Activated T-helper 1 cell treated with anti-CD3 and anti-CD28 coated beads, Interleukin-12 subunit alpha, Interleukin-12 subunit beta, Interleukin-2, Interleukin-4 antibody, amounts not matched to agents 30 ng/mL and 10 ng/mL and 1 ng/mL, durations not matched to agents 14 hours and 24 hours and 36 hours (primary cell): ENCODE measurements at regions of chr1 and their contacts with region 1.

Region 1: GRCh38 chr1:212284744-212285684 is at the start of gene PPP2R5A:
- DNase-seq: peak; percentile 99
- H3K4me3 Mint-ChIP-seq: peak within 1 kb of the TSS; percentile 97
- H3K27ac Mint-ChIP-seq: peak within 1 kb of the TSS; percentile 99
- H3K4me1 Mint-ChIP-seq: peaks cover 50% of the 10 kb centered on the region
- H3K27me3 Mint-ChIP-seq: peaks cover 3% of the 10 kb centered on the region
- total RNA-seq, gene PPP2R5A: 46.4 and 53.7 TPM in 2 replicates

Region 2: GRCh38 chr1:211680752-211681327 is 604.2 kb before region 1 on chr1:
- intact Hi-C with region 1: loop called (anchors 1 kb)
- DNase-seq: peak; percentile 64
- H3K4me3 Mint-ChIP-seq: no peak overlapping the region
- H3K27ac Mint-ChIP-seq: peak overlapping the region; percentile 86
- H3K4me1 Mint-ChIP-seq: peaks cover 14% of the 10 kb centered on the region
- H3K27me3 Mint-ChIP-seq: no peaks in the 10 kb centered on the region

Region 3: DNA sequence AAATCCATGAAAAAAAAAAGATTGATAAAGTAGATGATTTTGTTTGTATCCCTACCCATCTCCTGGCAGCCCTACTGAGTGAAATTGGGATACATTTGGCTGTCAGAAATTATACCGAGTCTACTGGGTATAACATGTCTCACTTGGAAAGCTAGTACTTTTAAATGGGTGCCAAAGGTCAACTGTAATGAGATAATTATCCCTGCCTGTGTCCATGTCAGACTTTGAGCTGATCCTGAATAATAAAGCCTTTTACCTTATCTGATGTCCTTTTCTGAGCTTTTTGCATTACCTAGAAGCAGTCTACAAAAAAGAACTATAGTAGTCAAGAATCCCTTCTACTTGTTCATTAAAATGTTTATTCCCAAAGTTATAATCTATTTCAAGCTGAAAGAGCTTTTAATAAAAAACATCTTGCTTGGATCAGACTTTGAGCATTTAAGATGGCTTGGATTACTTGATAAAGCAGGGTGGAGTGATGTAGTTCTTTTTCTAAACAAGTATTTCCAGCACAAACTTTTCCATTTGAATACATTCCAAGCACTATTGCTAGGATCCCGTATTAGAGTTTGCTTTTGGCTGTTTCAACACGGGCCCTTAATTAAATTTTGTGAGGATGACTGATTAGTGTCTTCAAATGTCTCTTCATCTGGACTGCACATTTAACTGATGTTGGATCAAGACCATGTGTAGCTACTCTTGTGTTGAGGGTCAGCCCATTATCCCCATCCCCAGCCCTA is 180.3 kb before region 1 on chr1:
- intact Hi-C with region 1: loop called (anchors 5 kb)
- DNase-seq: no peak
- H3K4me3 Mint-ChIP-seq: no peak overlapping the region
- H3K27ac Mint-ChIP-seq: no peak overlapping the region
- H3K4me1 Mint-ChIP-seq: peaks cover 30% of the 10 kb centered on the region
- H3K27me3 Mint-ChIP-seq: no peaks in the 10 kb centered on the region

Region 4: DNA sequence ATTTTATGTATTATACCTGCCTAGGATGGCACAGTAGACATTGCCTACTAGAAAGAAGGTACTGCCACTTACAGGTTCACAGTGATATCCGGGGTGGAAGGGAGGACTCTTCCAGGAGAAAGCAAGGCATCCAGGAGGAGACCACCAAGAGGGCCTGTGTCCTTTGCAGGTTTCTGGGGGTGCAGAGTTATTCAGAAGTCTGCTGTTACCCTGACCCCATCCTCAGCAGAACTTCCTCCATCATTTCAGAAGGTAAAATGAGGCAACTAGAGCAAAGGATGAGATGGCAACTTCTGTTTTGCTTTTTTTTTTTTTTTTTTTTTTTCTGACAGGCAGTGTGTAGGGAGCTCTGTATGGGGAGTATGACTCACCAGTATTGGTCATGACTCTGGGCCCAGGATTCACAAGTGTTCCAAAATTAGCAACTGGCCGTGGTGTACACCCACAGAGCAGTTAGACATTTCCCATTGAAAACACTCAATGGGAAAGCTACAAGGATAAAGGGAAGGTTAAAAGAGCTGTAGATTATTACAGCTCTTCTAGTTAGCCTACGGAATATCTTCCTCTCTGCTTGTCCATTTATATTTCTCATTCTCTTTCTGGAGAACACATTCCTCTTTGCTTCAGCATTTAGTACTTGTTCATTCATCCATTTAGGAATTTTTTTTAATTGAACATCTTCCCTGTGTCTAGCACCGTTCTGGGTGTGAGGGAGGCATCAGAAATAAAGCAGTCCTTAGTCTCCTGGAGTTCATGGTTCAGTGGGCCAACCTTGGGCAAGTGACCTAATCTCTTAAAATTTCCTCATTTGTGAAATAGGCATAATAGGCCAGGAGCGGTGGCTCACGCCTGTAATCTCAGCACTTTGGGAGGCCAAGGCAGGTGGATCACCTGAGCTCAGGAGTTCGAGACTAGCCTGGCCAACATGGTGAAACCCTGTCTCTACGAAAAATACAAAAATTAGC is 50.3 kb before region 1 on chr1:
- intact Hi-C with region 1: loop called (anchors 1 kb)
- DNase-seq: no peak
- H3K4me3 Mint-ChIP-seq: peak overlapping the region; percentile 57
- H3K27ac Mint-ChIP-seq: peak overlapping the region; percentile 67
- H3K4me1 Mint-ChIP-seq: peaks cover 72% of the 10 kb centered on the region
- H3K27me3 Mint-ChIP-seq: no peaks in the 10 kb centered on the region

Region 5: DNA sequence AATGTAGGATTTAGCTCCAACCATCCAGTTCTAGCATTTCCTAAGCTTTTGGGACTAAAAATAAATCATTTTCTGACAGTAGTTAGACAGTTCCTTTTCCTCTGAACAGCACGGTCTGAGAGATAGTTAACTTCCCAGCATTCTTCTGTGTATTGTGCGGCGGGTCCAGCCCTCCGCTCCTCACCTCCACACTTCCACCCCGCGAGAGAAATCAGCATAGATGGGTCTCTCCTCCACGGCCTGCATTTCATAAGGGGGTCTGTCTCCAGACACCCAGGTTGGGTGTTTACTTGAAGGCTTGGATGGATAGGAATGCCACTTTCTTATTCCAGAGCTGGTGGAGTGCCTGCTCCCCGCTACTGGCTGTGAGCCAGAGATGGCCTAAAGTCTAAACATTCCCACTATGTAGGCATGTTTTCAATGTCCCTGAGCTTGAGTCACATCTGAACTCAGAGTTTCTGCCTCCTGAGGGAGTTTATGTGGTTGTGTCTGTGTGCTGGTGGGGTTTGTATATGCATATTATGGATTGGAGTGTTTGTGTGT is 37.8 kb before region 1 on chr1:
- intact Hi-C with region 1: no loop called
- DNase-seq: no peak
- H3K4me3 Mint-ChIP-seq: no peak overlapping the region
- H3K27ac Mint-ChIP-seq: no peak overlapping the region
- H3K4me1 Mint-ChIP-seq: peaks cover 25% of the 10 kb centered on the region
- H3K27me3 Mint-ChIP-seq: no peaks in the 10 kb centered on the region

Region 6: DNA sequence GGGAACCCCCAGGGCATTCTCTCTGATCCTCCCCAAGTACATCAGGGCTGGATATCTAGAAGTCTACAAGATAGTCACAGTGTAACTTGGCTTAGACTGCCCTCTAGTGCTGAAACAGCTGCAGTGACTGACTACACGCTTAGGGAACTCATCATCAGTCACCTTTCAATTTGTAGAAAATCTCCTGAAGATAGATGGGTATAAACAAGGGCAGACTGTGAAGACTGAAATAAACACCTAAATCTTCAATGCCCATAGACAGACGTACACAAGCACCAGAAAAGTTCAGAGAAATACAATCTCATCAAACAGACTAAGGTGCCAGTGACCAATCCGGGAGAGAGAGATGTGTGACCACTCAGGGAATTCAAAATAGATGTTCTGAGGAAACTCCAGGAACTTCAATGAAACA is 83.1 kb after region 1 on chr1:
- intact Hi-C with region 1: loop called (anchors 5 kb)
- DNase-seq: peak; percentile 48
- H3K4me3 Mint-ChIP-seq: no peak overlapping the region
- H3K27ac Mint-ChIP-seq: no peak overlapping the region
- H3K4me1 Mint-ChIP-seq: no peaks in the 10 kb centered on the region
- H3K27me3 Mint-ChIP-seq: no peaks in the 10 kb centered on the region

Region 7: DNA sequence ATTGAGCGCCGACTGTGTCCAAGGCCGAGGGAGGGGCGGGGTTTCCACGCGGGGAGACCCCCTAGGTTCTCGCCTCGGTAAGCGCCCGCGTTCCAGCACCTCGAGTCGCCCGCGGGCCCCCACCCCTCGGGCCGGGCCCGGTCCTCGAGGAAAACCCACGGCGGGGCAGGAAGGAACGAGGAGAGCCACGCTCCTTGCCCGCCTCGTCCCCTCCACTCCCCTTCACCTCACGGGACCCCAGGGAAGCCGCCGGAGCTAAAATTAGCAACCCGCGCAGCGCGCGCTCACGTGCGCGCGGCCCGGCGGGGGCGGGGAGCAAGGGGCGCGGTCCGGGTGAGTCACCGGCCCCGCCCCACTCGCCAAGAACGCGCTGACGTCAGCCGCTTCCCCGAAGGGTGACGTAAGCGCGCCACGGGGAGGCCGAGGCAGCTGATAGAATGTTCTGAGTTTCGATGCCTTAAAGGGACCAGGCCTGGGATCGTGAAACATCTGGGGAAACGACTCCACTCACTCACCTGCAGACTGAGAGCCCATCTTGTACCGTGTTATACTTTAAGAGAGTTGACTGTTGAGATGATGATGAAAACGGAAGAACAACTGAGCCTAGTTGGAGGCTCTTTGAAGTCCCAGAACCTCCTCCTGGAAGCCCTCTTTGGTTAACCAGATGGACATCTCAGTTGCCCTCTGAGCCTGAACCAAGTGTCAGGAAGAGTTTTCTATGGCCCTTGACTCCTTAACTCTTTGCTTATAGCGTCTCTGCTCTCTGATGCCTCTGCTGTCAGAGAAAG is 273.9 kb after region 1 on chr1:
- intact Hi-C with region 1: loop called (anchors 10 kb)
- DNase-seq: peak; percentile 88
- H3K4me3 Mint-ChIP-seq: peak overlapping the region; percentile 61
- H3K27ac Mint-ChIP-seq: peak overlapping the region; percentile 93
- H3K4me1 Mint-ChIP-seq: peaks cover 10% of the 10 kb centered on the region
- H3K27me3 Mint-ChIP-seq: peaks cover 38% of the 10 kb centered on the region